ENCODE measurements at regions of chr22 and their contacts with region 1.

Region 1: DNA sequence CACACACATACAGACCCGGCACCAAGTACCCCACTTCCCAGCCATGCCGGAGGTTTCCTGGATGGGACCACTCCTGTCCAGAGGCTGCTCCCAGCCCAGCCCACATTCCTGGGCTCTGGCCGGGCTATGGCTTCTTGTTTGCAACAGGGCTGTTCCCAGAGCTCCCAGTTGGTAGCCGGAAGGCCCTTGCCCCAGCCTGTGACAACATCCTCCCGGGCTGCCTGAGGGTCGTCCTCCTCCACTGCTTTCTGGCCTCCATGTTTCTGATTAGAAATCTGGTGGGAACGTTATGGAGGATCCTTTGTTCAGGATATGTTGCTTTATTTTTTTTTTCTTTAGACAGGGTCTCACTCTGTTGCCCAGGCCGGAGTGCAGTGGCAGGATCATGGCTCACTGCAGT is 952 bp upstream of the CYP2D6 start:
- DNase-seq: no peak
- ATAC-seq: no peak
- H3K4me3 Mint-ChIP-seq: no peak overlapping the region
- H3K27ac Mint-ChIP-seq: no peak overlapping the region
- H3K4me1 Mint-ChIP-seq: no peaks in the 10 kb centered on the region
- H3K27me3 Mint-ChIP-seq: no peaks in the 10 kb centered on the region

Region 2: DNA sequence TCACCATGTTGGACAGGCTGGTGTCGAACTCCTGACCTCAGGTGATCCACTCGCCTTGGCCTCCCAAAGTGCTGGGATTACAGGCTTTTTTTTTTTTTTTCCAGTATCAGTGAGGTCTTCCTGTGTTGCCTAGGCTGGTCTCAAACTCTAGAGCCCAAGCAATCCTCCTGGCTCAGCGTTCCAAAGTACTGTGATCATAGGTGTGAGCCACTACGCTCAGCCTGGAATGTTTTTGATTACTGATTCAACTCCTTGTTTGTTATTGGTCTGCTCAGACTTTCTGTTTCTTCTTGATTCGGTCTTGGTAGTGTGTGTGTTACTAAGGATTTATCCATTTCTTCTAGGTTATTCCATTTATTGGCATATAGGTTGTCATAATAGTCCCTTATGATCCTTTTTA is 92.3 kb before region 1 on chr22:
- CTCF ChIA-PET with region 1: no interaction called
- POLR2A ChIA-PET with region 1: interaction called, 15 read pairs
- intact Hi-C with region 1: no loop called
- DNase-seq: no peak
- ATAC-seq: no peak
- H3K4me3 Mint-ChIP-seq: no peak overlapping the region
- H3K27ac Mint-ChIP-seq: no peak overlapping the region
- H3K4me1 Mint-ChIP-seq: no peaks in the 10 kb centered on the region
- H3K27me3 Mint-ChIP-seq: no peaks in the 10 kb centered on the region

Measured in activated CD4-positive, alpha-beta T cell treated with anti-CD3 and anti-CD28 coated beads for 36 hours (primary cell).